Panc1 (cell line): ENCODE measurements at regions of chr1 and their contacts with region 1.

Region 1: GRCh38 chr1:31843506-31843905 is 27.7 kb upstream of the SPOCD1 start:
- DNase-seq: peak; percentile 59
- ATAC-seq: no peak
- H3K4me3 ChIP-seq: no peak overlapping the region
- H3K27ac ChIP-seq: no peak overlapping the region
- H3K4me1 ChIP-seq: no peaks in the 10 kb centered on the region
- H3K27me3 ChIP-seq: no peaks in the 10 kb centered on the region
- CTCF ChIP-seq: no peak

Region 2: GRCh38 chr1:31111290-31111977 is 732.1 kb before region 1 on chr1:
- CTCF ChIA-PET with region 1: no interaction called
- POLR2A ChIA-PET with region 1: no interaction called
- in situ Hi-C with region 1: no loop called
- intact Hi-C with region 1: no loop called
- DNase-seq: no peak
- ATAC-seq: no peak
- H3K4me3 ChIP-seq: no peak overlapping the region
- H3K27ac ChIP-seq: no peak overlapping the region
- H3K4me1 ChIP-seq: no peaks in the 10 kb centered on the region
- H3K27me3 ChIP-seq: no peaks in the 10 kb centered on the region
- CTCF ChIP-seq: no peak

Region 3: GRCh38 chr1:31289021-31289420 is 554.5 kb before region 1 on chr1:
- CTCF ChIA-PET with region 1: interaction called, 10 read pairs
- POLR2A ChIA-PET with region 1: no interaction called
- in situ Hi-C with region 1: no loop called
- intact Hi-C with region 1: no loop called
- DNase-seq: no peak
- ATAC-seq: no peak
- H3K4me3 ChIP-seq: no peak overlapping the region
- H3K27ac ChIP-seq: no peak overlapping the region
- H3K4me1 ChIP-seq: no peaks in the 10 kb centered on the region
- H3K27me3 ChIP-seq: no peaks in the 10 kb centered on the region
- CTCF ChIP-seq: no peak

Region 4: DNA sequence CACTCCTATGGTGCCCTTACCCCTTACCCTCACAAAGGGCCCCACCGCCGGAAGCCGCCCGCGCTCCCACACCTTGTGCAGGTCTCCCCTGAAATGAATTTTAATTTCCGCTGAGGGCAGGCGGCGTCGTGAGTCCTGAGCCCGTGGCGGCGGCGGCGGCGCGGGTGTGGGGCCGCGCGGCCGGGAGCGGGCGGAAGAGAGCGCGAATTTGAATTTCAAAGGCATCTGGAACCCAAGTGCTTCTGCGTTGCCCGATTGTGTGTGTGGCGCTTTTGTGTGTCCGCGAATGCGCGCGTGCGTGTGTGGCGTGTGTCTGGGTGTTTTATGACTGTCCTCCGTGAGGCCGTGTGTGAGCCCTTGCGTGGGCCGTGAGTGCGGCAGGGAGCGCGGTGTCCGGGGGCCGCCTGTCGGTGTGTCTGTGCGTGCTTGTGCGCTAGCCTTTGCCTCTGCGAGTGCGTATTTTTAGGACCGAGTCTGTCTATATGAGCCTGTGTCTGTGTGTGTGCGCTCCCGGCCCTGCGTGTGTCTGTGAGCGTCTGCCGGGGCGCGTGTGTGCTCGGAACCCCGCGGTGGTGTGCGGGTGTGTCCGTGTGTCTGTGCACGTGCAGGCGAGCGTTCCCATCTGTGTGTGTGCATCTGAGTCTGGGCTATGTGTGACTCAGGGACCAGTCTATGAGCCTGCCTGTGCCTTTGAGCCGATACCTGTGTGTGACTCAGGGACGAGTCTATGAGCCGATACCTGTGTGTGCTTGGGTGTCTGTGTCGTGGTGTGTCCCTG is 71.4 kb before region 1 on chr1:
- CTCF ChIA-PET with region 1: no interaction called
- POLR2A ChIA-PET with region 1: no interaction called
- in situ Hi-C with region 1: no loop called
- intact Hi-C with region 1: no loop called
- DNase-seq: no peak
- ATAC-seq: no peak
- H3K4me3 ChIP-seq: no peak overlapping the region
- H3K27ac ChIP-seq: no peak overlapping the region
- H3K4me1 ChIP-seq: peaks cover 32% of the 10 kb centered on the region
- H3K27me3 ChIP-seq: peaks cover 2% of the 10 kb centered on the region; the same call in 1 of the 2 replicates
- CTCF ChIP-seq: no peak

Region 5: DNA sequence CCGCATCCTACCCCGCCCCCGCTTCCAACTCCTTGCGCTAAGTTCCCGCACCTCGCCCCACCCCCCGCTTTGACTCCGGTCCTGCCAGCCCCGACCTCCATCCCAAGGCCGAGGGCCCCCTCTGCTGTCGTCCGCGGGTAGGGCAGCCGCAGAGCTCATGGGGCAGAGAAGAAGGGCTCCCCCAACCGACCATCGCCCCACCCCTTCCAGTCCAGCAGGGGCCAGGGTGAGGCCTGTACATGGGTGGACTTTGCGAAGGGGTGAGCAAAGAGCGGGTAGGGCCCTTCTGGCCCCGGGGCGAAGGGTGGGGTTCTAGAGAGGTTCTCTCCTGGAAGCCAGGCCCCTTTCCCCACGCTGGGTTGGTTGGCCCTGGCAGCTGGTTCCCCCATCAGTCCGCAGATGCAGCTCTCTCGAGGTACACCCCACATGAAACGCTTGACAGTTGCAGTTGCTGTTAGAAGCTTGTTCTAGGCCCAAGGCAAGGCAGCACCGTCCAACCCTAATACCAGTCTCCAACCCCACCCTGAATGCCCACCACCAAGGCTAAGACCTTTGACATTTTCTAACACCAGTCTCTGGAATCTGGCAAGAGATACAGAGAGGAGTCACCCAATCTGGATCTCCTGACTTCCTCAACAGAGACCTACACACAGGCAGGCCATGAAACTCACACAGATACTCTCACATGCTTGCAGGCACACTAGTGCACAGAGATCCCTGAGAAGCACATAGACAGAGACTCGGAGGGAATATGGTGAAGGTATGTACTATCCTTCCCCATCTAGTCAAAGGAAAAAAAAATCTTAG is 54.0 kb before region 1 on chr1:
- CTCF ChIA-PET with region 1: no interaction called
- POLR2A ChIA-PET with region 1: no interaction called
- in situ Hi-C with region 1: no loop called
- intact Hi-C with region 1: no loop called
- DNase-seq: peak; percentile 50
- ATAC-seq: peak; percentile 87
- H3K4me3 ChIP-seq: peak overlapping the region; percentile 53 to 88
- H3K27ac ChIP-seq: peak overlapping the region; percentile 18; the same call in 1 of the 2 replicates
- H3K4me1 ChIP-seq: 0 out of 2 replicates have a peak, but pooled peaks cover 14% of the 10 kb centered on the region
- H3K27me3 ChIP-seq: no peaks in the 10 kb centered on the region
- CTCF ChIP-seq: peak; percentile 97